ENCODE measurements at regions of chr15 and their contacts with region 1.

Region 1: GRCh38 chr15:76799760-76800159 is 105.4 kb downstream of the SCAPER start:
- DNase-seq: no peak
- ATAC-seq: no peak
- H3K4me3 ChIP-seq: no peak overlapping the region
- H3K27ac ChIP-seq: no peak overlapping the region
- H3K4me1 ChIP-seq: no peaks in the 10 kb centered on the region
- H3K27me3 ChIP-seq: no peaks in the 10 kb centered on the region
- CTCF ChIP-seq: no peak

Region 2: GRCh38 chr15:76711351-76711827 is 88.4 kb before region 1 on chr15:
- CTCF ChIA-PET with region 1: no interaction called
- POLR2A ChIA-PET with region 1: interaction called, 16 read pairs
- in situ Hi-C with region 1: no loop called
- intact Hi-C with region 1: no loop called
- DNase-seq: no peak
- ATAC-seq: no peak
- H3K4me3 ChIP-seq: no peak overlapping the region
- H3K27ac ChIP-seq: no peak overlapping the region
- H3K4me1 ChIP-seq: no peaks in the 10 kb centered on the region
- H3K27me3 ChIP-seq: no peaks in the 10 kb centered on the region
- CTCF ChIP-seq: no peak